Aorta (tissue), 5 donors: ENCODE measurements at regions of chr22 and their contacts with region 1.

Region 1: GRCh38 chr22:50244420-50245213 is at the start of gene TUBGCP6:
- DNase-seq: peak; percentile 97 to 99
- ATAC-seq: peak; percentile 95
- H3K4me3 ChIP-seq: peak within 1 kb of the TSS; percentile 55 to 77
- H3K27ac ChIP-seq: peak within 1 kb of the TSS in 1 of 2 donors; percentile 74
- H3K4me1 ChIP-seq: no peaks in the 10 kb centered on the region
- H3K27me3 ChIP-seq: no peaks in the 10 kb centered on the region
- total RNA-seq, gene TUBGCP6: 29.0 to 49.5 TPM

Region 2: GRCh38 chr22:50190182-50190940 is 54.3 kb before region 1 on chr22:
- intact Hi-C with region 1: loop called in 1 of 2 experiments (anchors 5 kb)
- DNase-seq: peak; percentile 90
- ATAC-seq: peak; percentile 65
- H3K4me3 ChIP-seq: peak overlapping the region; percentile 1 to 6
- H3K27ac ChIP-seq: peak overlapping the region in 1 of 2 donors; percentile 41
- H3K4me1 ChIP-seq: no peaks in the 10 kb centered on the region
- H3K27me3 ChIP-seq: no peaks in the 10 kb centered on the region